Posterior vena cava (tissue), 2 donors: ENCODE measurements at regions of chr3 and their contacts with region 1.

Region 1: DNA sequence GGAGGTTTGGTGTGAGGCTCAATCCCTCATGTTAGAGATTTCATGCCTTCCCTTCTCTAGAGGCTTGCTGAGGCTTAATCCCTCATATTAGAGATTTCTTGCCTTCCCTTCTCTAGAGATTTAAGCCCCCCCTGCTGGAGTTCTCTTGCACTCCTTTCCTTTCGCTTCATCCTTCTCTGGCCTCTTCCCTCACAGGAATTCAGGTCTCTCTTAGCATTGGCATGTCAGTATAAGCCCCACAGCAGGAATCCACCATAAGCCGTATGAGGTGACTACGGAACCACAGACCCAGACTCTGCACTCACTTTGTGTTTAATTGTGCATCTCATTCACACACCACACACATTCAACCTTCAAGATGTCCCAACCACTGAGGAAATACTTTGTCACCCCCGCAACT is 338.6 kb upstream of the POU1F1 start:
- DNase-seq: no peak

Region 2: DNA sequence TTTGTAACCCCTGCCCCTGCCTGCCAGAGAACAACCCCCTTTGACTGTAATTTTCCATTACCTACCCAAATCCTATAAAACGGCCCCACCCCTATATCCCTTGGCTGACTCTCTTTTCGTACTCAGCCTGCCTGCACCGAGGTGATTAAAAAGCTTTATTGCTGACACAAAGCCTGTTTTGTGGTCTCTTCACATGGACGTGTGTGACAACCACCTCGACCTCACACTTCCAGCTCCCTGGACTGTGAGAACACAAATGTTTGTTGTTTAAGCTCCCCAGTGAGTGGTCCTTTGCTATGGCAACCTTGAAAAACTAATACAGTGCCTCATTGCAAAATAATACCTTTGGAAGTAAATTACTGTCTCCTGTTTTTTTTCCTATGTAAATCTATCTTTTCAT is 39.4 kb before region 1 on chr3:
- intact Hi-C with region 1: loop called in 1 of 2 experiments (anchors 1 kb)
- DNase-seq: no peak

Region 3: DNA sequence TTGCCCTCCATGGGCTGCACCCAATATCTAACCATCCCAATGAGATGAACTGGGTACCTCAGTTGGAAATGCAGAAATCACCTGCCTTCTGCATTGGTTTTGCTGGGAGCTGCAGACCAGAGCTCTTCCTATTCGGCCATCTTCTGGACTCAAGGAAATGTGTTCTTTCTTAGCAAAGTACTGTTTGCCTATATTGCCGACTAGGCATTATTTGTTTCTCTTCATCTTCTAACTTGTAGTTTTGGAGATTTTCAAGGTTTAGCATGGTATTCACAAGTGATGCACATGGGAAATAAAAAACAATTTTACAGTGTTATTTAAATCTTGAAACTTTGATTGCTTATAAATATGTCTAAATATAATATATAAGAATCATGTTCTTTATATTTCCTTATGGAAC is 39.2 kb after region 1 on chr3:
- intact Hi-C with region 1: no loop called
- DNase-seq: no peak